Uterus (tissue), 4 donors: ENCODE measurements at regions of chr6 and their contacts with region 1.

Region 1: DNA sequence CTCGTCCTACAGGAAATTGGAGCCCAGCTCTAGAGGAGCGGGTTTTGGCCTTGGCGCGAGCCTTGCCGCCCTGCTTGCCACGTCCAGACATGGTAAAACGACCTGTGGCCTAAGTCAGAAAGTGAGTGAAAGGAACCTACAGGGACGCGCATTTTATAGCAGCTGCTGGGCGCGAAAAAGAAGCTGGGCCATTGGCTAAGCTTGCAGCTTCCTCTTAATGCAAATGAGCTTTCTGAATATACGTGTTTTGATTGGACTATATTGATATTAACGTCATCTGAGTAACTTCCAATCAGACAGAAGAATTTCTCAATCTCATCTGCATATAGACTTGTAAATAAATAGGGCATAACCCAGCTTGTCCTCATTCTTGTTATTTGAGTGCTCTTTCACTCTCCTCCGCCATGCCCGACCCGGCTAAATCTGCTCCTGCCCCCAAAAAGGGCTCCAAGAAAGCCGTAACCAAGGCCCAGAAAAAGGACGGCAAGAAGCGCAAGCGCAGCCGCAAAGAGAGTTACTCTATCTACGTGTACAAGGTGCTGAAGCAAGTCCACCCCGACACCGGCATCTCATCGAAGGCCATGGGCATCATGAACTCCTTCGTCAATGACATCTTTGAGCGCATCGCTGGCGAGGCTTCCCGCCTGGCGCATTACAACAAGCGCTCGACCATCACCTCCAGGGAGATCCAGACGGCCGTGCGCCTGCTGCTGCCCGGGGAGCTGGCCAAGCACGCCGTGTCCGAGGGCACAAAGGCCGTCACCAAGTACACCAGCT is 18.9 kb downstream of the OR2B2 start:
- DNase-seq: peak; percentile 28 to 42
- H3K4me3 ChIP-seq: peak overlapping the region; percentile 67 to 68
- H3K27ac ChIP-seq: peak overlapping the region in 1 of 2 donors; percentile 93
- H3K4me1 ChIP-seq: peaks cover 0 to 5% of the 10 kb centered on the region in 2 donors
- H3K27me3 ChIP-seq: peaks cover 22 to 42% of the 10 kb centered on the region in 2 donors
- CTCF ChIP-seq: no peak
- POLR2A ChIP-seq: peak; percentile 27 to 71

Region 2: DNA sequence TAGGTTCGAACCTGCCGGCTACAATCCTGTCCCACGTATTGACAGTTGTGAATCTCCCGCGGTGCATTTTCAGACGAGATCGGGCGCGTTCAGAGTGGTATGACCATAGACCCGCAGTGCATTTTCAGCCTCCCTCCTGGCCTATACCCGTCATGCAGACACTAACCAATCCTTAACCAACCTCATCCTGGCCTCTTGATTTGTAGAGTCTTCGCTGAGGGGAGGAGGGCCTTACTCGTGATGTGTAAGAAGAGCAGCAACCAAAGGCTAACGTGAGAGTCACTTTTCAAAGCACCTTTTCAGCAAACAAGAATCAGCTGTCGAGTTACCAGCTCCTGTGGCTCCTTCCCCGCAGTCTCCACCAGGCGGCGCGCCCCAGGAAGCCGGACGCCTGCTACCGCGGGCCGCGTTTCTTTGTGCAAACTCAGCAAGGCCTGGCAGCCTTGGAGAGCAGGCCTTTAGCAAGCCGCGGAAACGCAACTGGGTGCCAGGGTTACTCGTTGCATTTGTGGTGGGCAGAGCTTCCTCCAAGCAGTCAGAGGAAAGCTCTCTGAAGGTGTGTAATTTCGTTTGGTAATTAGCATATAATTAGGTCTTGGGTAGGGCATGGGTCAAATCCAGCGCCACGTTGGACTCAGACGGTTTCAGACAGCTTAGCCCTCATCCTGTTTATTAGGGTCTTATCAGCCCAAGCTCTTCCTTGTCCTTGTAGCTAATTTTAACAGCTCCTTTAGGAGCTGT is 120.8 kb before region 1 on chr6:
- intact Hi-C with region 1: loop called (anchors 10 kb)
- DNase-seq: peak; percentile 77 to 79
- H3K4me3 ChIP-seq: no peak overlapping the region
- H3K27ac ChIP-seq: no peak overlapping the region
- H3K4me1 ChIP-seq: no peaks in the 10 kb centered on the region
- H3K27me3 ChIP-seq: no peaks in the 10 kb centered on the region
- CTCF ChIP-seq: peak; percentile 77 to 87 (median 84)
- POLR2A ChIP-seq: no peak